ENCODE measurements at regions of chr7 and their contacts with region 1.

Region 1: GRCh38 chr7:100852048-100852872 is at the start of gene SLC12A9:
- DNase-seq: peak; percentile 88
- H3K4me3 Mint-ChIP-seq: peak within 1 kb of the TSS; percentile 93
- H3K27ac Mint-ChIP-seq: peak within 1 kb of the TSS; percentile 49
- H3K4me1 Mint-ChIP-seq: peaks cover 20% of the 10 kb centered on the region
- H3K27me3 Mint-ChIP-seq: no peaks in the 10 kb centered on the region
- total RNA-seq, gene SLC12A9: 34.0 to 36.3 TPM

Region 2: GRCh38 chr7:100803398-100804233 is 48.6 kb before region 1 on chr7:
- CTCF ChIA-PET with region 1: interaction called, 141 read pairs
- POLR2A ChIA-PET with region 1: interaction called, 13 read pairs
- DNase-seq: peak; percentile 65
- H3K4me3 Mint-ChIP-seq: no peak overlapping the region
- H3K27ac Mint-ChIP-seq: no peak overlapping the region
- H3K4me1 Mint-ChIP-seq: peaks cover 11% of the 10 kb centered on the region
- H3K27me3 Mint-ChIP-seq: peaks cover 7% of the 10 kb centered on the region

Region 3: GRCh38 chr7:100837099-100837836 is 15.0 kb before region 1 on chr7:
- CTCF ChIA-PET with region 1: interaction called, 18 read pairs
- POLR2A ChIA-PET with region 1: interaction called, 6 read pairs
- DNase-seq: peak; percentile 78
- H3K4me3 Mint-ChIP-seq: peak overlapping the region; percentile 69
- H3K27ac Mint-ChIP-seq: peak overlapping the region; percentile 42
- H3K4me1 Mint-ChIP-seq: peaks cover 25% of the 10 kb centered on the region
- H3K27me3 Mint-ChIP-seq: peaks cover 5% of the 10 kb centered on the region

Region 4: DNA sequence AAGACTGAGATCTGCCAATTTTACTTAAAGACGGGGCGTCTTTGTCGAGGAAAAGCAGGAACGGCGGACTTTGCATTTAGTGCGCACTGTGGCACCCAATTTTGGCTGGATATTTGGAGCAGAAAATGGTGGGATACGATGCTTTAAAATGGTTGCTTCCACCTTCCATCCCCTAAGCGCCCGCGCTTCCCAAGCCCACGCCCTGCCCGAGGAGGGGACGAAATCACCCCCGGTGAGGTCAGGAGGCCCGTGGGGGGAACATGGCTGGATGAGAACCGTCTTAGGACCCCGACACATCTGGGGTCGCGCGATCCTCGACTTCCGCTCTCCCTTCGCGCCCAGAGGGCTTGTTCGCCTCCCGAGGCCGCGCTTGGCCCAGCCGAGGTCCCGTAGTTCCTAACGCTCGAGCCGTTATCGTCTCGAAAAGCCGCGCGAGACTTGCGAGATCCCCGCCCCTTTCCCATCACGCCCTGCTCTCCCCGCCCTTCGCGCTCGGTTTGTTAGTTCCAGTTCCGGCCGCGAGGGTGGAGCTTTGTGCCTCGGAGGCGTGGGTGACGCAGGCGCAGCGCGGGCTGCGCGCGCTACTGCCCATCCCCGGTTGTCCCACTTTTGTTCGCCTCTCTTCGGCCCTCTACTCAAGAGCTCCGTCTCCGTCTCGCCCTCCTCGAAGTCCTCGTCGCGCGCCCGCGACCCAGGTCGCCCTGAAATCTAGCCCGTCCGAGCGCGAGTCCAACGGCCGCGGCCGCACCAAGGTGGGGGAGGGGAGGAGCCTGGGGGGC is 22.5 kb after region 1 on chr7 and contains the start of gene SRRT:
- CTCF ChIA-PET with region 1: interaction called, 14 read pairs
- POLR2A ChIA-PET with region 1: interaction called, 38 read pairs
- DNase-seq: peak; percentile 99
- H3K4me3 Mint-ChIP-seq: peak within 1 kb of the TSS; percentile 98
- H3K27ac Mint-ChIP-seq: peak within 1 kb of the TSS; percentile 97
- H3K4me1 Mint-ChIP-seq: peaks cover 60% of the 10 kb centered on the region
- H3K27me3 Mint-ChIP-seq: no peaks in the 10 kb centered on the region
- total RNA-seq, gene SRRT: 202 to 205 TPM

Region 5: DNA sequence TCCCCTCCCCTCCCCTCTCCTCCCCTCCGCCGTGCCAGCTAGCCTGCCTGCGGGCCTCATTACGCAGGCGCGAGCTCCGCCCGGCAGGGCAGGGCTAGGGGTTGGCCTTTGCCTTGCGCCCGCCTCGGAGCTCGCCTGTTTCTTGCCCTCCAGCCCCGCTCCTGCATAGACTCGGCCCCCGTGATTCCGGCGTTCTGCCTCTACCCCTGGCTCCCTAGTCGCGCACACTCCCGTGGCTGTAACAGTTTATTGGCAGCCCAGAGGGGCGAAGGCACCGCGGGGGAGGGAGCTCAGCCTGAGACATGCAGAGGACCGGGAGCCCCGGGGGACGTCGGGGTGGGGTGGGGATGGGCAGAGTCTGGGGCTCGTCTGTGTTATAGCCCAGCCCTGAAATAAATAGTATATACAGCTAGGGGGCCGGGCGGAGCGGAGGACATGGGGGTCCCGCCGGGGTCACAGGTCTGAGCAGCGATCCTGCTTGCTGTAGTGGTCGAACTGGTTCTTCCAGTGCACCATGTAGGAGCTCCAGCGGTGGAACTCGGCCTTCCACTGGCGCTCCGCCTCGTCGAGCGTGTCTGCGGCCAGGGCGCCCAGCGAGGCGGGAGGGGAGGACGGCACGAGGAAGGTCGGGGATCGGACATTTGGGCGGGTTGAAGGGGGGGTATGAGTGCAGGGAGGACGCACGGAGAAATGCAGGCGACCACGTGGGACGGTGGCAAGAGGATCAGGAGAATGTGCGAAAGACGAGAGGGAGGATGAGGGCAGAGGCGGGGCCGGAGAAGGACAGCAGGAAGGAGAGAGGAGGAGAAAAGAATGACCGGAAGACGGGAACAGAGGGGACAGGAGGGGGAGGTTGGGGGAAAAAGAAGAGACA is 37.7 kb after region 1 on chr7:
- CTCF ChIA-PET with region 1: interaction called, 10 read pairs
- POLR2A ChIA-PET with region 1: interaction called, 11 read pairs
- DNase-seq: peak; percentile 92
- H3K4me3 Mint-ChIP-seq: peak overlapping the region; percentile 78
- H3K27ac Mint-ChIP-seq: peak overlapping the region; percentile 16
- H3K4me1 Mint-ChIP-seq: peaks cover 52% of the 10 kb centered on the region
- H3K27me3 Mint-ChIP-seq: peaks cover 32% of the 10 kb centered on the region

Region 6: DNA sequence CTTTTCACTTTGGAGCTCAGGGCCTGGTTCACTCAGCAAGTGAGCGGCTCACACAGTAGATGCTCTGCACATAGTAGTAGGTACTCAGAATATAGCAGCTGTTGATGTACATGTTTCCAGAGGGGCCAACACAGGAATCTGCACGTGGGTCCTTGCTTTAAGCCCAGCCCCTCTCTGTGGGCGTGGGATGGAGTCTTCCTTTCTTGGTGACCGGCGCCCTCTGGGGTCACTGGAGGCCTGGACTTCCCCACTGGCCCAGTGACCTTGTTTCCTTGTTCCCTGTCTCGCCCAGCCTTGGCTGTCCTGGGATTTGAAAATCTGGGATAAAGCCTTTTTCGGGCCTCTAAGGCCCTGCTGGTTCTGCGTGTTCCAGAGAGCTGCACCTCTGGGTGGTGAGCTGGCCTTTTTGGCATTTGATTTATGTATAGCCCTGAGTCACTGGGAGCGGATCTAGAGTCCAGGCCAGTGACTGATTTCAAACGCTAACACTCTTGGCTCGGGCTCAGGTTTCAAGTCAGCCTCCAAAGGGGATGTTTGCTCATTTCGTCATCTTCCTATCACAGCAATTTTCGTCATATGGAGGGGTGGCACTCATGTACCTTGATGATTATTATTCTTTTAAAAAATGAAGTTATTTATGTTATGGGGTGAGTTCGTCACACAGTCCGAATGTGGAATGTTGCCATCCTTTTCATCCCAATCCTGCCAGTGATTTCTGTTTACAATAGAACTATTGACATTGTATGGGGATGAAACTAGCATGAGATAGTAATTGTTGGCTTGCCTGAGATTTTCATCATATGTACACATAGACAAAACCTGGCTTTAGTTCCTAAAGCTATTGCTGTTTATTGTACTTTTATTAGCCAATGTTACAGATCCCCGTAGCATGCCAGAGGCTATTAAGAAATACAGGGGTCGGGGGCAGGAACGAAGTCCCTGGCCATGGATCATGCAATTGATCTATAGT is 1030.6 kb after region 1 on chr7:
- CTCF ChIA-PET with region 1: no interaction called
- POLR2A ChIA-PET with region 1: no interaction called
- DNase-seq: no peak
- H3K4me3 Mint-ChIP-seq: no peak overlapping the region
- H3K27ac Mint-ChIP-seq: no peak overlapping the region
- H3K4me1 Mint-ChIP-seq: peaks cover 8% of the 10 kb centered on the region
- H3K27me3 Mint-ChIP-seq: no peaks in the 10 kb centered on the region